Endothelial cell of umbilical vein (primary cell): ENCODE measurements at regions of chr1 and their contacts with region 1.

Region 1: DNA sequence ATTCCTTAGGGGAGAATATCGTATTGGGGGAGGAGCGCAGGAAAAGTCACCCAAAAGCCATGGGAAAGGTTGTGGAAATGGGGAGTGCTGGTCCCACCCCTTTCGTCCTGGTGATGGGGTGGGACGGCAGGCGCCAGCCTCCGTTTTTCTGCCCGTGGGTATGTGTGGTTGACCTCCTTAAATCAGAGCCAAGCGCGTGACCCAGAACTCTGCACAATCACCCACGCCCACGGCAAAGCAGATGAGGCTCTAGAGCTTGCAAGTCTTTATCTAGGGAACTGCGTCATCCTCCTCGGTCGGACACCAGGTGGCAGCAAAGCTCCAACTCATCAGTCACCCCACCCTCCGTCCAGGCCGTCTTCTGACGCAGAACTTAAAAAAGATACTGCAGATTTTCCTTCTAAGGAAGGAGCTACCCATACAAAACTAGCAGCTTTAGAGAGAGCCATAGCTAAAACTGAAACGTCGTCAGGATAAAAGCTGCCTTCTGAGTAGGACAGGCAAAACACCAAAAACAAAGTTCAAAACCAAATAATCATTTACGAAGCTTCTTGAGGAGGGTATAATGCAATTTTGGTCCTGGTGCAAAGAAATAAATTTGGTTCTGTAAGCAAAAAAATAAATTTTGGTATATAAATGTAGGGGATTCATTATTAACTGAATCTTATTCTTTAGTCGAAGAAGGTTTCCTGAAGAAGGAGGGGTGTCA is 62.0 kb downstream of the TBX19 start:
- DNase-seq: peak; percentile 81
- H3K4me3 ChIP-seq: no peak overlapping the region
- H3K27ac ChIP-seq: no peak overlapping the region
- H3K4me1 ChIP-seq: peaks cover 5% of the 10 kb centered on the region
- H3K27me3 ChIP-seq: peaks cover 4 to 16% of the 10 kb centered on the region in 2 experiments
- CTCF ChIP-seq: peak; percentile 62 to 86
- POLR2A ChIP-seq: no peak

Region 2: DNA sequence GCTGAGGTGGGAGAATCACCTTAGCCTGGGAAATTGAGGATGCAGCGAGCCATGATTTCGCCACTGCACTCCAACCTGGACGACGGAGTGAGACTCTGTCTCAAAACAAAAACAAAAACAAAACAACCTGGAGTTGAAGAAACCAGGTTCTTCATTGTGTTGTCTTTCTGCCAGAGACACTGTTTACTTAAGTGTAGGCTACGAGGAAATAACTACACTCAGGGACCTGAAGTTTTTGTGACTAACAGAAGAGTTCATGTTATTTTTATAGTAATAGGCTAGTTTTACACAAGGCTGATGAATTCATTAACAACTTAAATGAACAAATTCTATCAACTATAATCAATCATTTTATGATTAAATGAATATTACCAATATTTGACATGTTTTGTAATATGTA is 307.4 kb before region 1 on chr1:
- CTCF ChIA-PET with region 1: no interaction called
- POLR2A ChIA-PET with region 1: no interaction called
- dilution Hi-C with region 1: no loop called
- intact Hi-C with region 1: no loop called
- DNase-seq: no peak
- H3K4me3 ChIP-seq: no peak overlapping the region
- H3K27ac ChIP-seq: no peak overlapping the region
- H3K4me1 ChIP-seq: no peaks in the 10 kb centered on the region
- H3K27me3 ChIP-seq: no peaks in the 10 kb centered on the region
- CTCF ChIP-seq: no peak
- POLR2A ChIP-seq: no peak

Region 3: DNA sequence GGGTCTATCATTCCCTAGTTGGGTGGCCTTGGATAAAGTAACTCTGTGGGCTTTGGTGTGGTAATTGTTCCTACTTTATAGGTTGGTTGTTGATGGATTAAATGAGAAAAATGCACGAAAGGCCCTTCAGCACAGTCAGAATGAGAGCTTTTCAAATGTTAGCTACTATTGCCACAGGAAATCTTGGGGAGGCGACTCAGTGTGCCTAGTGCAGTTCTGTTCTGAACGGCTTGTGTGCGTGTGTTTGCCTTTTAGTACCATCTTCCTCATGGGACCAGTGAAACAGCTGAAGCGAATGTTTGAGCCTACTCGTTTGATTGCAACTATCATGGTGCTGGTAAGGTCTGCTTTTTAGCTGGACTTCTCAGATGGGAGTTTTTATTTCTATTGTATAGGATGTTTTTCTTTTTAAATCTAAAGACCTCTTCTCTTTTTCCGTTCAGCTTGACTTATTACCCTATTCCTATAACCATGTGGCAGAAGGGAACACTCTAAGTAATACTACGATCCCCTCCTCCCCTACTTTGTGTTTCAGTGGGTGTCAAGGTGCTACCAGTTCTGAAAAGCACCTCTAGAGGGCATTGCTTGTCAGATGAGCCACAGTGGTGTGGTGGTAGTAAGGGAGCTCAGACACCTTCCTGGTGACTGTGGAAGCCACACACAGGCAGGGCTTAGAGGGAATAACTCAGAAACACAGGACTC is 107.7 kb before region 1 on chr1:
- CTCF ChIA-PET with region 1: interaction called, 90 read pairs
- POLR2A ChIA-PET with region 1: no interaction called
- dilution Hi-C with region 1: no loop called
- intact Hi-C with region 1: loop called (anchors 5 kb)
- DNase-seq: peak; percentile 64
- H3K4me3 ChIP-seq: no peak overlapping the region
- H3K27ac ChIP-seq: no peak overlapping the region
- H3K4me1 ChIP-seq: no peaks in the 10 kb centered on the region
- H3K27me3 ChIP-seq: no peaks in the 10 kb centered on the region
- CTCF ChIP-seq: peak; percentile 75 to 79
- POLR2A ChIP-seq: no peak

Region 4: GRCh38 chr1:168312718-168313604 is 29.8 kb before region 1 on chr1:
- CTCF ChIA-PET with region 1: interaction called, 11 read pairs
- POLR2A ChIA-PET with region 1: no interaction called
- dilution Hi-C with region 1: no loop called
- intact Hi-C with region 1: no loop called
- DNase-seq: no peak
- H3K4me3 ChIP-seq: no peak overlapping the region
- H3K27ac ChIP-seq: no peak overlapping the region
- H3K4me1 ChIP-seq: no peaks in the 10 kb centered on the region
- H3K27me3 ChIP-seq: no peaks in the 10 kb centered on the region
- CTCF ChIP-seq: no peak
- POLR2A ChIP-seq: no peak

Region 5: DNA sequence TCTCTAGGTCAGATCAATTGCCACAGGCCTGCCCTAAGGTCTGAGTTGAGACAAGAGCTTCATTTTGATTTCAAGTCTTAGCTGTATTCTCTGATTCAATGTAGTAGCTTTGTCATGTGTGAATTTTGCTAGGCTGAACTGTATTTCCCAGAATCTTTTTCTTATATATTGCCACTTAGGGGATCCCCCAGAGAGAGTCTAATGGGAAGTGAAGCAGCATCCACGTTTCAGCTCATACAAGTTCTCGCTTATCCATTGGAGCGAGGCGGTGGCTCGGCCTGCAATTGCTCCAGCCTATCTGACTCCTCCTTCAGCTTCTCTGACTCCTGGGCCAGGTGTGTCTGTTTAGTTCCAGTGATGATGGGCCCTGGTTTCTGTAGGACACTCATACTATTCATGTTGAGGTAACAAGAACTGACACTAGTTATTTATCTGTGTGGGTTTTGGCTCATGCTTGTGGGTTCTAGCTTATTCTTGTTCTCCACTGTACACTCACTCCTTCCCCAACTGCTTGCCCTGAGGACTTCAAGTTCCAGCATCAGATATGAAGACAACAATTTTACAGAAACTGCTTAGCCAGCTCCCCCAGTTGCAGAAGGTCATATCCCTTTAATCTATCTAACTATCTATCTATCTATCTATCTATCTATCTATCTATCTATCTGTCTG is 13.9 kb before region 1 on chr1:
- CTCF ChIA-PET with region 1: interaction called, 24 read pairs
- POLR2A ChIA-PET with region 1: no interaction called
- dilution Hi-C with region 1: no loop called
- intact Hi-C with region 1: no loop called
- DNase-seq: no peak
- H3K4me3 ChIP-seq: no peak overlapping the region
- H3K27ac ChIP-seq: no peak overlapping the region
- H3K4me1 ChIP-seq: no peaks in the 10 kb centered on the region
- H3K27me3 ChIP-seq: no peaks in the 10 kb centered on the region
- CTCF ChIP-seq: no peak
- POLR2A ChIP-seq: no peak

Region 6: GRCh38 chr1:168439456-168440375 is 97.0 kb after region 1 on chr1:
- CTCF ChIA-PET with region 1: interaction called, 21 read pairs
- POLR2A ChIA-PET with region 1: no interaction called
- dilution Hi-C with region 1: no loop called
- intact Hi-C with region 1: loop called (anchors 1 kb)
- DNase-seq: peak; percentile 63
- H3K4me3 ChIP-seq: no peak overlapping the region
- H3K27ac ChIP-seq: no peak overlapping the region
- H3K4me1 ChIP-seq: no peaks in the 10 kb centered on the region
- H3K27me3 ChIP-seq: no peaks in the 10 kb centered on the region
- CTCF ChIP-seq: peak; percentile 69 to 74
- POLR2A ChIP-seq: no peak

Region 7: DNA sequence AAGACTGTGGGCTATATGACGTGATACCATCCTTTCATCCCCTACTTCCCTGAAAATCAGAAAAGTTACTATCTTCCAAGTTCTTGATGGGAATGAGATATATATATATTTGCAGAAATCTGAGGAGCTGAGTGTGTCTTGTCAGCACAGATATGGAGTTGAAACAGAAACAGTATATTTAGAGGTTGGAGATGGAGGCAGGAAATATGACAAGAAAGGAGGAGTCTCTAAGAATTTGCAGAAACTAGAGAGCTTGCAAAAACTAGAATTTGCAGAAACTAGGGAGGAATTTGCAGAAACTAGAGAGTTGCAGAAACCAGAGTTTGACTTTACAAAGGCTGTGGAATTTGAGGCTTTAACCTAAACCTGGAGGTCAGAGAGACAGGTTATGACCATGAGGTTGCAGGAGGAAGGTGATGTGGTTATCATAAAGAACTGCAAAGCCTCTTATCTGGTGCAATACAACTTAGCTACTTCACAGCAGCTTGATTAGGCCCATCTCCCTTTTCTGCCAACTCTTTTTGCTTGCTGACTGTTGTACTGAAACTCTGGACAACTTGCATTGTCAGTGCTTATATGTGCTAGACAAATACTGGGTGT is 178.8 kb after region 1 on chr1:
- CTCF ChIA-PET with region 1: no interaction called
- POLR2A ChIA-PET with region 1: no interaction called
- dilution Hi-C with region 1: no loop called
- intact Hi-C with region 1: no loop called
- DNase-seq: no peak
- H3K4me3 ChIP-seq: no peak overlapping the region
- H3K27ac ChIP-seq: no peak overlapping the region
- H3K4me1 ChIP-seq: no peaks in the 10 kb centered on the region
- H3K27me3 ChIP-seq: no peaks in the 10 kb centered on the region
- CTCF ChIP-seq: no peak
- POLR2A ChIP-seq: no peak

Region 8: GRCh38 chr1:168582693-168583336 is 240.1 kb after region 1 on chr1:
- CTCF ChIA-PET with region 1: interaction called, 16 read pairs
- POLR2A ChIA-PET with region 1: no interaction called
- dilution Hi-C with region 1: no loop called
- intact Hi-C with region 1: no loop called
- DNase-seq: no peak
- H3K4me3 ChIP-seq: no peak overlapping the region
- H3K27ac ChIP-seq: no peak overlapping the region
- H3K4me1 ChIP-seq: no peaks in the 10 kb centered on the region
- H3K27me3 ChIP-seq: peaks cover 0 to 4% of the 10 kb centered on the region in 2 experiments
- CTCF ChIP-seq: no peak
- POLR2A ChIP-seq: no peak

Region 9: GRCh38 chr1:168686666-168687065 is 343.9 kb after region 1 on chr1:
- CTCF ChIA-PET with region 1: no interaction called
- POLR2A ChIA-PET with region 1: no interaction called
- dilution Hi-C with region 1: no loop called
- intact Hi-C with region 1: no loop called
- DNase-seq: no peak
- H3K4me3 ChIP-seq: no peak overlapping the region
- H3K27ac ChIP-seq: no peak overlapping the region
- H3K4me1 ChIP-seq: no peaks in the 10 kb centered on the region
- H3K27me3 ChIP-seq: no peaks in the 10 kb centered on the region
- CTCF ChIP-seq: no peak
- POLR2A ChIP-seq: no peak